Activated CD4-positive, alpha-beta T cell treated with anti-CD3 and anti-CD28 coated beads for 36 hours (primary cell): ENCODE measurements at regions of chr5 and their contacts with region 1.

Region 1: GRCh38 chr5:179079165-179079987 is 19.2 kb downstream of the ZNF354C start:
- DNase-seq: no peak
- ATAC-seq: no peak
- H3K4me3 Mint-ChIP-seq: no peak overlapping the region
- H3K27ac Mint-ChIP-seq: no peak overlapping the region
- H3K4me1 Mint-ChIP-seq: no peaks in the 10 kb centered on the region
- H3K27me3 Mint-ChIP-seq: no peaks in the 10 kb centered on the region

Region 2: GRCh38 chr5:178711572-178711971 is 367.8 kb before region 1 on chr5:
- CTCF ChIA-PET with region 1: no interaction called
- POLR2A ChIA-PET with region 1: no interaction called
- intact Hi-C with region 1: loop called in 1 of 2 experiments (anchors 5 kb)
- DNase-seq: no peak
- ATAC-seq: no peak
- H3K4me3 Mint-ChIP-seq: no peak overlapping the region
- H3K27ac Mint-ChIP-seq: no peak overlapping the region
- H3K4me1 Mint-ChIP-seq: no peaks in the 10 kb centered on the region
- H3K27me3 Mint-ChIP-seq: no peaks in the 10 kb centered on the region

Region 3: DNA sequence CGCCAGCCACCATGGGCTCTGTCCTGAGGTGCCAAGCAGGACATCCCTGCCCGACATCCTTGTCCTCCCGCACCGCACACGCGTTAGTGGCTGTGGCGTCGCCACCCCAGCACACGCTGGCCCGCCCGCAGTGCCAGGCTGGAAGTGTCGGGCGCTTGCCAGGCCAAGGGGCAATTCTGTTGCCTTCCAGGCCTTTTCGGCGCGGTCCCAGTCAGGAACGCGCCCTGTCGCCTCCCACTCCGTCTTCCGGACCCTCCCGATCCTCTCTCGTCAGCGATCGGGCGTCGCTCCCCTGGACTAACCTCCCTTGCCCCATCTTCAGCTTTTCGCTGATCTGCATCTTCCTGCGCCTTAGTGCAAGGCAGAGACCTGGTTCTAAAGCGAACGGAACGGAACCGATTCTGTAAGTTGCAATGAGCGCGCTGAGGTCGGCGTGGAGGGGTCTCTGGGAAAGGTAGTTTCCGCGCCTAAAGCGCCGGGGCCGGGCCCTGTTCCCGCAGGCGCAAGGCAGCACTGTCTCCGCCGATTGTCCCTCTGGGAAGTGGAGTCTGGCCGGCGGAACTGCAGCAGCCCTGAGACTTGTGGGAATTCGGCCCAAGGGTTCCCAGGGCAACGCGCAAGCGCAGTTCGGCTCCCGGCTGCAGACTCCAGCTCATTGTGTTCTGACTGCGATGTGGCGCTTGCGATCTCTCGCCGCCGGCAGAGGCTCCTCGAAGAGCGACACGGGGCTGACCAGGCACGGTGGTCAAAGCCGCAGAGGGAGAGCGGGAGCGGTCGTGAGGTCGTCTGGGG is 138.6 kb before region 1 on chr5 and contains the start of gene ZNF454:
- CTCF ChIA-PET with region 1: no interaction called
- POLR2A ChIA-PET with region 1: no interaction called
- intact Hi-C with region 1: loop called in 1 of 2 experiments (anchors 1 kb)
- DNase-seq: no peak
- ATAC-seq: no peak
- H3K4me3 Mint-ChIP-seq: no peak within 1 kb of the TSS
- H3K27ac Mint-ChIP-seq: no peak within 1 kb of the TSS
- H3K4me1 Mint-ChIP-seq: no peaks in the 10 kb centered on the region
- H3K27me3 Mint-ChIP-seq: peaks cover 26% of the 10 kb centered on the region
- total RNA-seq, gene ZNF454: not detected